Body of pancreas (tissue), 4 donors: ENCODE measurements at regions of chr21 and their contacts with region 1.

Region 1: GRCh38 chr21:31198575-31198974 is 145.5 kb downstream of the TIAM1 start:
- DNase-seq: peak in 1 of 4 donors; percentile 13
- ATAC-seq: peak; percentile 47
- H3K4me3 ChIP-seq: no peak overlapping the region
- H3K27ac ChIP-seq: no peak overlapping the region
- H3K4me1 ChIP-seq: peaks cover 7% of the 10 kb centered on the region
- H3K27me3 ChIP-seq: no peaks in the 10 kb centered on the region
- CTCF ChIP-seq: peak; percentile 35 to 72 (median 66)
- POLR2A ChIP-seq: no peak

Region 2: DNA sequence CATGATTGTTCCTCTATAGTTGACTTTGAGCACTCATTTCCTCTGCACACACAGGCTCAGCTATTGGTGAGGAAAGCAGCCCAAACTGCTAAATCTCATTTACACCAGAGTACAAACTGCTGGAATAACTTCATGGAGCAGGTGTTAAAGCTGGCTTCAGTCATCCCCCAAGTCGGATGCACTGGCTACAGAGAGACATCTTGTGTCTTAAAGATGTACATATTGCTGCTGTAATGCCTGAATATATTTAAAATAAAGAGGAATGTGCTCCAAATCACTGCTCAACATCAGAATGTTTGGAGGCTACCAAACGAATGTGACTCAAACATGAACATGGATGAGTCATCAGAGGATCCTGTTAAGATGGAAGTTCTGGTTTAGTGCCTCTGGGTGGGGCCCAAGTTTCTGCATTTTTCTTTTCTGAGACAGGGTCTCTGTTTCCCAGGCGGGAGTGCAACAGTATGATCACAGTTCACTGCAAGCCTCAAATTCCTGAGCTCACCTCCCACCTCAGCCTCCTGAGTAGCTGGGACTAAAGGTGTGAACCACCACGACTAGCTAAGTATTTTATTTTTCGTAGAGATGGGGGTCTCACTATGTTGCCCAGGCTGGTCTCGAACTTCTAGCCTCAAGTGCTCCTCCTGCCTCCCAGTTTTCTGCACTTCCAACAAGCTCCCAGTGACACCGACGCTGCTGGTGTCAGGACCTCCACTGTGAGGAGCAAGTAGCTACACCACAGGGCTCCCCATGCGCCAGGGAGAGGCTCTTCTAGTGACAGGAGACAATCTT is 81.3 kb before region 1 on chr21:
- intact Hi-C with region 1: no loop called
- DNase-seq: no peak
- ATAC-seq: no peak
- H3K4me3 ChIP-seq: no peak overlapping the region
- H3K27ac ChIP-seq: no peak overlapping the region
- H3K4me1 ChIP-seq: no peaks in the 10 kb centered on the region
- H3K27me3 ChIP-seq: no peaks in the 10 kb centered on the region
- CTCF ChIP-seq: no peak
- POLR2A ChIP-seq: no peak

Region 3: DNA sequence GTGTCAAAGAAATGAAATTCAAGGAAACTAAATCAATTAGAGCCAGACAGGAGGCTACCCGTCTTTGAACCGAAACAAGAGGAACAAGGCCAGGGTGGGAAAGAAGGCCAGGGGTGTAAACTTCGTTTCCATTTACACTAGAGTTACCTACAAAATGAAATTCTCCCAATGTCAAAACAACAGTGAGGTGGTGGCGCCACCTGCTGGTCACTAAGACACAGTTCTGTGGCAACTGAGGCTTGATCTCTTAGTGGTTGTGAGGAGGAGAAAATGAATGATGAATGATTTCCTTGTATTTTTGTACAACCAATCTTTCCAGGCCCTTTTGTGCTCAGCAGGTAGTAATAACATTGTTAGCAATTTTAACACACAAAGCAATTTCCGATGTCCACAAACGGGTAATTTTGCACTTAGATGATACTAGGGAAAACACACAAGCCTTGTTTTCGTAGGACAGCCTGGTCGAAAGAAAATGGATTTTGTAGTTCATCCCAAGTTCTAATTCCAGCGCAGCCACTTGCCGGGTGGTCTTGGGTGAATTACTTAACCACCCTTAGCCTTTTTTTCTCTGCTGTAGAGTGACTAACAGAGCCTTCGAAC is 406.1 kb after region 1 on chr21:
- intact Hi-C with region 1: loop called (anchors 10 kb)
- DNase-seq: peak; percentile 66 to 75 (median 68)
- ATAC-seq: peak; percentile 63
- H3K4me3 ChIP-seq: no peak overlapping the region
- H3K27ac ChIP-seq: no peak overlapping the region
- H3K4me1 ChIP-seq: no peaks in the 10 kb centered on the region
- H3K27me3 ChIP-seq: no peaks in the 10 kb centered on the region
- CTCF ChIP-seq: peak; percentile 67 to 86 (median 78)
- POLR2A ChIP-seq: no peak